ENCODE measurements at regions of chr17 and their contacts with region 1.

Region 1: DNA sequence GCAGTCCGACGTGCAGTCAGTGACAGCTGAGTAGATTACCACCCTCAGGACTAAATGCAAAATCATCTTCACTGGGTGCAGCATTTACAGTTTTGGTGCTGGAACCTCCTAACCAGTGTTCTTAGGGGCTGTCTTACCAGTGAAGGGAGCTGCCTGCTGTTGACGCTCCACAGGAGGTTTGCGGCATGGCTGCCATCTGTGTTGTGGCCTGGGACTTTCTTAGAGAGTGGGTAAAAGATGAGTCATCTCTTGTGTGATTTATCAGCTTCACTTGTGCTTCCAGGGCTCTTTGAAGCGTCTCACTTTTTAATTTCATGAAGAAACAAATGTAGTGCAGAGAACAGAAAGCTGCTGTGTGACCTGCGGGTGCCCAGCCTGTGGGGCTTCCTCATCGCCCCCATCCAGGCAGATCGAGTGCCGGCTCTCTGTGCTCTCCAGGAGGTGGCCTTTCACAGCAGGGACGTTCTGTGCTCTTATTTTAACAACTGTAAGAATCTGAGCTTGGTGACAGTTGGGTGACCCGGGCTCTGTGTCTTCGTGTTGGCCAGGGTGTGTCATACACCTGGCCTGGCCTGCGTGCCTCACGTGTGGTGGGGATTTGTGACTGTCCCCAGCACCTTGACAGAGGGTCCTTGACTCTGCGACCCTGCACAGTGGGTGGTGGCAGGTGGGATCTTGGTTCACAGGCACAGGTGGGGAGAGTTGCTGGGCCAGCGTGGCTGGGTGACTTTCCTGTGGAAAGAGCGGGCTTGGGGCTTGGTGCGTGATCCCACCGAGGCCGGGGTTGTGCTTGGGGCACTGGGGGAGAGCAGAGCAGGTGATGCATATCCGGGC is 24.3 kb upstream of the ZNF750 start:
- DNase-seq: peak; percentile 73 to 96 (median 95)
- H3K4me3 ChIP-seq: no peak overlapping the region
- H3K27ac ChIP-seq: peak overlapping the region in 1 of 2 experiments; percentile 31
- H3K4me1 ChIP-seq: peaks cover 0 to 46% (median 43%) of the 10 kb centered on the region in 4 experiments
- H3K27me3 ChIP-seq: no peaks in the 10 kb centered on the region

Region 2: GRCh38 chr17:82756166-82756565 is 108.0 kb before region 1 on chr17:
- CTCF ChIA-PET with region 1: interaction called, 4 read pairs
- POLR2A ChIA-PET with region 1: interaction called, 11 read pairs
- DNase-seq: no peak
- H3K4me3 ChIP-seq: no peak overlapping the region
- H3K27ac ChIP-seq: no peak overlapping the region
- H3K4me1 ChIP-seq: peaks cover 0 to 19% (median 14%) of the 10 kb centered on the region in 4 experiments
- H3K27me3 ChIP-seq: no peaks in the 10 kb centered on the region

Region 3: DNA sequence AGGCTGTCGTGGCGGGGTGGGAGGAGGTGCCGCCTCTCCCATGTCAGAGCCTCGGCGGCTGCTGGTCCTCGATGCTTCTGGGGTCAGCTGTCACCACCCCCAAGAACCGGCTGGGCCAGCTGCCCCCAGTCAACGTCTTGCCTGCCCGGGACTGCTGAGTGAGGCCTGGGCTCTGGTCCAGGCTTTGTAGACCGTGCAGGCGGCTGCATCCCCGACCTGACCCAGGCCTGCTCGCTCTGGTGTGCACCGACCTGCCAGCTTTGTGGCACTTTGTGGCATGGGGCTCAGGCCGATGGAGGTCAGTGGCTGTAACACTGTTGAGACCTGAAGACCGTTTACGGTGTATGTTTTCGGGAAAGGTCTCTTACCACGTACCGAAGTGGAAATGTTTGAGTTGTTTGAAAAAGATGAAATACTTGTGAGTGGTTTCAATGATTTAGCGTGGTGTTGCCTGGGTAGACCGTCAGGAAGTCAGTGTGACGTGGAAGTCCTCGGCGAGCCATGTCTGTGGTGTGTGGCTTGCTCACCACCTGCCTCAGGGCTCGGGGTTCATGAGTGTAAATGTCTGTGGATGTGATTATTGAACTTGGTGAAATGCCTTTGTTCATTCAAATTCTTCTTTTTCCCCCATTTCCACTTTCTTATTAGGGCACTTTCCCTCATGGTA is 28.9 kb after region 1 on chr17:
- CTCF ChIA-PET with region 1: no interaction called
- POLR2A ChIA-PET with region 1: no interaction called
- DNase-seq: peak; percentile 58 to 78 (median 61)
- H3K4me3 ChIP-seq: no peak overlapping the region
- H3K27ac ChIP-seq: no peak overlapping the region
- H3K4me1 ChIP-seq: peaks cover 0 to 23% (median 19%) of the 10 kb centered on the region in 4 experiments
- H3K27me3 ChIP-seq: no peaks in the 10 kb centered on the region

Region 4: DNA sequence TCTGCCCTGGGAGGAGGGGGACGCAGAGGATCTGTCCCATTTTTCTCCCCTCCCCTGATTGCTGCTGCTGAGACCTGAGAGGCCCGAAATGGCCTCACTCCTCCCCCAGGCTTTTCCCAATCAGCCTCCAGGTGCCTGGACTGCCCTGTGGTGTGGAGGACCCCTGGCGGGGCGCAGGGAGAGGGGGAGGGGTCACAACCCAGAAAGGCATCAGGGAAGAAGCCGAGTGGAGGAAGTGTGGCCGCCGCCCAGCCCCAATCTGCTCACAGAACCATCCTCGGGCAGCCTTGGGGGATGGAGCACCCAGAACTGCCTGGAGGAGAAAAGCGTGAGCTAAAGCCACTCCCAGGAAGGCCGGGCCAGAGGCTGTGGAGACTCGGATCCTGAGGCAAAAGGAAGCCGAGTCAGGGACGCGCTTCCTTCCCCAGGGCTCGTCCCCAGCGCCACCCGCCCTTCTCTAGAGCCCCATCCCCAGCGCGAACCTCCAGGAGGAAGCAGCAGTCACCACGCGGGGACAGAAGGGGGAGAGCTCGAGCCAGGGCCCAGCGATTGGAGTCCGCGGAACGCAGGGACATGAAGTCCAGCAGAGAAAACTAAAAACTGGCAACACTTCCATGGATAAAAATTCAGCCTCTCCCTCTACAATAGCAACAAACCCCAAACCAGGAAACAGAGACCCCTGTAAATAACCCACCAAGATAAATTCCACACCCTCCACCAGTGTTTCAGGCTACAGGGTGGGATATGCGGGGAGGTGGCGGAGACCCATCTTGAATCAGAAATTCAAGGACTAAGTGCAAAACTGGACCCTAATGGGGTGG is 98.9 kb after region 1 on chr17:
- CTCF ChIA-PET with region 1: no interaction called
- POLR2A ChIA-PET with region 1: no interaction called
- DNase-seq: peak; percentile 68 to 69 (median 68)
- H3K4me3 ChIP-seq: peak overlapping the region in 5 of 7 experiments; percentile 19 to 55 (median 29)
- H3K27ac ChIP-seq: no peak overlapping the region
- H3K4me1 ChIP-seq: peaks cover 5 to 22% (median 16%) of the 10 kb centered on the region in 4 experiments
- H3K27me3 ChIP-seq: no peaks in the 10 kb centered on the region

Measured in common myeloid progenitor, CD34-positive (primary cell).